GM10248 (cell line): ENCODE measurements at regions of chr7 and their contacts with region 1.

Region 1: DNA sequence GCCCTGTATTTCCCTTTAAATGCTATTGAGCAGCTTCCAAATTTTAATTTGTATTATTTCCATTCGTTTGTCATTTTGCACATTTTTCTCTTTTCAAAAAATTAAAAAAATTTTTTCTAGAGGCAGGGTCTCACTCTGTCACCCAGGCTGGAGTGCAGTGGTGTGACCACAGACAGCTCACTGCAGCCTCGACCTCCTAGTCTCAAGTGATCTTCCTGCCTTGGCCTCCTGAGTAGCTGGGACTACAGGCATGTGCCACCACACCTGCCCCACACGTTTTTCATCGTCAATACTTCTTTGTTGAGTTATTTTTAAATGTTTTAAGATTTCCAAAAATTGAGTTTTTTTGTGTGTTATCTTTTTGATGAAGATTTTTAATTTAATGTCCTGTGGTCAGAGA is 4.7 kb downstream of the RPA3 start:
- DNase-seq: no peak
- CTCF ChIP-seq: no peak

Region 2: GRCh38 chr7:7607010-7607409 is 106.7 kb before region 1 on chr7:
- CTCF ChIA-PET with region 1: no interaction called
- POLR2A ChIA-PET with region 1: no interaction called
- DNase-seq: no peak
- CTCF ChIP-seq: no peak

Region 3: GRCh38 chr7:7702826-7703225 is 10.9 kb before region 1 on chr7:
- CTCF ChIA-PET with region 1: interaction called, 14 read pairs
- POLR2A ChIA-PET with region 1: no interaction called
- DNase-seq: no peak
- CTCF ChIP-seq: no peak

Region 4: GRCh38 chr7:7884855-7885254 is 171.1 kb after region 1 on chr7:
- CTCF ChIA-PET with region 1: no interaction called
- POLR2A ChIA-PET with region 1: no interaction called
- DNase-seq: no peak
- CTCF ChIP-seq: no peak

Region 5: GRCh38 chr7:9029671-9030530 is 1316.2 kb after region 1 on chr7:
- CTCF ChIA-PET with region 1: no interaction called
- POLR2A ChIA-PET with region 1: no interaction called
- DNase-seq: no peak
- CTCF ChIP-seq: no peak